Calu3 (cell line): ENCODE measurements at regions of chr9 and their contacts with region 1.

Region 1: GRCh38 chr9:113261917-113262671 is 13.3 kb downstream of the CDC26 start:
- DNase-seq: no peak
- H3K4me3 Mint-ChIP-seq: no peak overlapping the region
- H3K27ac Mint-ChIP-seq: no peak overlapping the region
- H3K4me1 Mint-ChIP-seq: no peaks in the 10 kb centered on the region
- H3K27me3 Mint-ChIP-seq: no peaks in the 10 kb centered on the region
- CTCF ChIP-seq: no peak

Region 2: DNA sequence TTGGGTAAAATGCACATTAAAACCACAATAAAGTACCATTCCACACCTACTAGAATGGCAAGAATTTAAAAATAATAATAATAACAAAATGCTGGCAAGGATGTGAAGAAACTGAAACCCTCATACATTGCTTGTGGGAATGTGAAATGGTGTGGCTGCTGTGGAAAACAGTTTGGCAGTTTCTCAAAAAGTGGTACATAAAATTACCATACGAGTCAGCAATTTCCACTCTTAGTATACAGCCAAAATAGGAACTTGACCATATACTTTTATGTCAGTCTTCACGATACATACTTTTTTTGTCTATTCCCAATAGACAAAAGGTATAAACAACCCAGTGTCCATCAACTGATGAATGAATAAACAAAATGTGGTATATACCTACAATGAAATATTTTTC is 56.7 kb before region 1 on chr9:
- CTCF ChIA-PET with region 1: no interaction called
- intact Hi-C with region 1: loop called (anchors 10 kb)
- DNase-seq: no peak
- H3K4me3 Mint-ChIP-seq: no peak overlapping the region
- H3K27ac Mint-ChIP-seq: no peak overlapping the region
- H3K4me1 Mint-ChIP-seq: no peaks in the 10 kb centered on the region
- H3K27me3 Mint-ChIP-seq: no peaks in the 10 kb centered on the region
- CTCF ChIP-seq: no peak